Activated B cell treated with CpG ODN at 0.5 μM for 24 hours (primary cell): ENCODE measurements at regions of chr12 and their contacts with region 1.

Region 1: GRCh38 chr12:109093022-109093918 is at the start of gene ALKBH2:
- DNase-seq: peak; percentile 90
- ATAC-seq: peak; percentile 68
- H3K4me3 Mint-ChIP-seq: peak within 1 kb of the TSS; percentile 88
- H3K27ac Mint-ChIP-seq: peak within 1 kb of the TSS; percentile 92
- H3K4me1 Mint-ChIP-seq: peaks cover 33% of the 10 kb centered on the region
- H3K27me3 Mint-ChIP-seq: no peaks in the 10 kb centered on the region
- CTCF ChIP-seq: peak; percentile 92
- total RNA-seq, gene ALKBH2: 21.3 and 24.1 TPM in 2 replicates

Region 2: GRCh38 chr12:107685360-107686248 is 1407.7 kb before region 1 on chr12 and contains the start of gene PWP1:
- CTCF ChIA-PET with region 1: no interaction called
- POLR2A ChIA-PET with region 1: no interaction called
- intact Hi-C with region 1: loop called (anchors 10 kb)
- DNase-seq: peak; percentile 93
- ATAC-seq: peak; percentile 90
- H3K4me3 Mint-ChIP-seq: peak within 1 kb of the TSS; percentile 96
- H3K27ac Mint-ChIP-seq: peak within 1 kb of the TSS; percentile 97
- H3K4me1 Mint-ChIP-seq: peaks cover 23% of the 10 kb centered on the region
- H3K27me3 Mint-ChIP-seq: no peaks in the 10 kb centered on the region
- CTCF ChIP-seq: no peak
- total RNA-seq, gene PWP1: 49.4 and 53.5 TPM in 2 replicates

Region 3: DNA sequence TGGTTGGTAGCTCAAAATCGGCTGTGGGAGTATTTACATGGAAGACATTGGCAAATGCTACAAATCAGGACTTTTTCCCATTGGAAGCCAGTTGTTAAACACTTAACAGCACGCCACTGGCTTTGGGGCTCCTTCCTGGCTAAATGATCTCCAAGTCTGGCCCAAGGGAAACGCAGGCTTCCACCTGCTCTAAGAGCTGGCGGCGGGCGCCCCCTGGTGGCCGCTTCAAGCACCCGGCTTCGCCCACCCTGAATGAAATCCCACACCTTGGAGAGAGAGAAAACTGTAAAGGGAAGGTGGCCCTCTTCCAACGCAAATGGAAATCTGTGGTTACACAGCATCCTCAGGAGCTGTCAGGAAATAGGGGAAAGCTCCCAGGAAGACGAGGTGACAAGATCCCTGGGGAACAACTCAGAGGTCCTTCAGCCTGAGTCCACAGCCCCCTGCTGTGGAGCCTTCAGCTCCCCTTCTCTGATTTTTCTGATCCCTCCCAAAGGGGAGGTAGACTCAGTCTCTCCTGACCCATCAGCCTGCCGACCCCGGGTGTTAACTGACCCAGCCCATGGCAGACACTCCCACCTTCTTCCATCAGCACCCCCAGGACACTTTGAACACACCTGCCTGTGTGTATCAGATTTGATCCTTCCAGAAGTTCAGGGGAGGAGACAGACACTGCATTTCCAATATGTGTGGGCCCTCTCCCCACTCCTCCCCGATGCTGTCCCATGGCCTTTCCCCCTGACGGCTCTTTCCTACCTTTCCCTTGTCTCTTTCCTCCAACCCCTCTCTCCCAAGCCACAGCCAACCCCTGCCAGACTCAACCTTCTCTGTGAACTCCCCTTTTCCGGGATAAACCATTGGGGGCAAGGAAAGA is 475.0 kb before region 1 on chr12:
- CTCF ChIA-PET with region 1: interaction called, 4 read pairs
- POLR2A ChIA-PET with region 1: no interaction called
- intact Hi-C with region 1: loop called (anchors 5 kb)
- DNase-seq: peak; percentile 76
- ATAC-seq: peak; percentile 40
- H3K4me3 Mint-ChIP-seq: peak overlapping the region; percentile 19
- H3K27ac Mint-ChIP-seq: peak overlapping the region; percentile 53
- H3K4me1 Mint-ChIP-seq: peaks cover 70% of the 10 kb centered on the region
- H3K27me3 Mint-ChIP-seq: no peaks in the 10 kb centered on the region
- CTCF ChIP-seq: peak; percentile 60

Region 4: GRCh38 chr12:108803428-108804105 is 289.7 kb before region 1 on chr12:
- CTCF ChIA-PET with region 1: no interaction called
- POLR2A ChIA-PET with region 1: no interaction called
- intact Hi-C with region 1: loop called (anchors 1 kb)
- DNase-seq: no peak
- ATAC-seq: peak; percentile 87
- H3K4me3 Mint-ChIP-seq: no peak overlapping the region
- H3K27ac Mint-ChIP-seq: peak overlapping the region; percentile 56
- H3K4me1 Mint-ChIP-seq: peaks cover 21% of the 10 kb centered on the region
- H3K27me3 Mint-ChIP-seq: no peaks in the 10 kb centered on the region
- CTCF ChIP-seq: peak; percentile 93

Region 5: GRCh38 chr12:108950991-108951739 is 142.1 kb before region 1 on chr12:
- CTCF ChIA-PET with region 1: no interaction called
- POLR2A ChIA-PET with region 1: no interaction called
- intact Hi-C with region 1: loop called (anchors 1 kb)
- DNase-seq: peak; percentile 46
- ATAC-seq: peak; percentile 82
- H3K4me3 Mint-ChIP-seq: no peak overlapping the region
- H3K27ac Mint-ChIP-seq: no peak overlapping the region
- H3K4me1 Mint-ChIP-seq: peaks cover 7% of the 10 kb centered on the region
- H3K27me3 Mint-ChIP-seq: peaks cover 8% of the 10 kb centered on the region
- CTCF ChIP-seq: peak; percentile 97

Region 6: DNA sequence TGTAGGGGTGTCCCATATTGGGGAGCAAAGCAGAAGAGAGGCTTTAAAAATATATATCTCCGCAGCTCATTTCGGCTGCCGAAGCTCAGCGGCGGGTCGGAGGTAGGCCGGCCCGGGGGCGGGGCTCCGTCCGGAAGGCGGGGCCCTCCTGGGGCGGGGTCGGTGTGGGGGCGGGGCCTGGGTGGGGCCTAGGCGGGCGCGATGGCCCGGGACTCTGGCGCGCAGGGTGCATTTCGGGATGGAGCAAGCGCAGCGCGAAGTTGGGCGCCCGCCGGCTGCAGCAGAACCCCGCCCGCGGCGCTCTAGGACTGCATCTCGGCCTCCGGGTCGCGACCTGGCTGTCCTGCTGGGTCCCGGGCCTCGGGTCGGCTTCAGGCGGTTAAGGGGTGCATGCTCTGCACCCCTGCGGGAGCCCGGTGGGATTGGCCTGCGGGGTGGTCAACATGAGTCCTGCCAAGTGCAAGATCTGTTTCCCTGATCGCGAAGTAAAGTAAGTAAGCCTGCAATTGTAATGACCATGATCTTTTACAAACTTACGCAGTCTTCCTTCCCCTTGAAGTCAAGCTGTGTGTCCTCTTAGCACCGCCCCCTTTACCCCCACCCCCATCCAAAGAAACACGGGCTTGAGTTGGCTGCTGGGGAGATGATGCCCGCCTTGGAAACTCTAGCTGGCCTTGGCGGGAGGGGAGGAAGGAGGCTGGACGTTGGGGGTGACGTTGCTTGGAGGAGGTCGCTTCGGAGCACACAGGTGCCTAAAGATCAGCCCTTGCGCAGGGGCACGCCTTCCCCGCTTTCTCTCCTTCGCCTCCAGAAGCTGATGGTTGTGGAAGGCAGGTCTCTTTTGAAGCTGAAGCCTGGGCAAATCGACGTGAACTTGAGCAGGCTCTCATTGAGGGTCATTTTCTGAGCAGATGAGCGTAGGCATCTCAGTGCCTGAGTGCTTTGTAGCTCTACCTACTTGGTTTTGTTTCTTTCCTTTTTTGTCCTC is 61.5 kb after region 1 on chr12:
- CTCF ChIA-PET with region 1: no interaction called
- POLR2A ChIA-PET with region 1: interaction called, 3 read pairs
- intact Hi-C with region 1: loop called (anchors 2 kb)
- DNase-seq: peak; percentile 76
- ATAC-seq: peak; percentile 97
- H3K4me3 Mint-ChIP-seq: peak overlapping the region; percentile 95
- H3K27ac Mint-ChIP-seq: peak overlapping the region; percentile 90
- H3K4me1 Mint-ChIP-seq: peaks cover 24% of the 10 kb centered on the region
- H3K27me3 Mint-ChIP-seq: peaks cover 12% of the 10 kb centered on the region
- CTCF ChIP-seq: no peak

Region 7: DNA sequence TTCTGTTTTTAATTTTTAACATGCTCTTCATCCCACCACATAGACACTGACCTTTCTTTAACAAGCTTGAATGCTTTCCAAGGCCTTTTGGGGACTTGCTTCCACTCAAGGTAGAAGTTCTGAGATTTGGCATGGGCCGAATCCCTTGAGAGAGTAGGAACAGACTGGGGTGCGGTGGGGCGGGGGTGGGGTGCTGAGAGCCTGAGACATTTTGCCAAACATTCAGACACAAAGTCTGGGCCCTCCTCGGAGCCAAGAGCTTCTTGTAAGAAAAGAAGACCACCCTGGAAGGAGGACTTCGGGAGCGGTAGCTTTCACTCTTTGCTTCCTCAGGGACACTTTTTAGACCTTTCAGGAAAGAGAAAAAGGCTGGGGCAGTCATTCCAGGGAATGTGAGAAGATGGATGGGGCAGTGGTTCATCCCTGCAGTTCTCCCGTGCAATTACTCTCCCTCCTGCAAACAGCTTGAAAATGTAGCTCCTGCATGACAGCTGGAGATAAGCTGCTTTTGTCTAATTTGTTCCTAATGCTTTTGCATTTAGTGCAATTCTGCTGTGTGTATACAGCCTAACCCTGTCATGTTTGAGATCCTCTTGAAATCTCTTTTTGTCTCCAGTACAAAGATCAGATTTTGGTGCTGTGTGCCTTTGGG is 238.2 kb after region 1 on chr12:
- CTCF ChIA-PET with region 1: no interaction called
- POLR2A ChIA-PET with region 1: no interaction called
- intact Hi-C with region 1: no loop called
- DNase-seq: no peak
- ATAC-seq: no peak
- H3K4me3 Mint-ChIP-seq: no peak overlapping the region
- H3K27ac Mint-ChIP-seq: no peak overlapping the region
- H3K4me1 Mint-ChIP-seq: no peaks in the 10 kb centered on the region
- H3K27me3 Mint-ChIP-seq: peaks cover 10% of the 10 kb centered on the region
- CTCF ChIP-seq: no peak